ENCODE measurements at regions of chr10 and their contacts with region 1.

Region 1: DNA sequence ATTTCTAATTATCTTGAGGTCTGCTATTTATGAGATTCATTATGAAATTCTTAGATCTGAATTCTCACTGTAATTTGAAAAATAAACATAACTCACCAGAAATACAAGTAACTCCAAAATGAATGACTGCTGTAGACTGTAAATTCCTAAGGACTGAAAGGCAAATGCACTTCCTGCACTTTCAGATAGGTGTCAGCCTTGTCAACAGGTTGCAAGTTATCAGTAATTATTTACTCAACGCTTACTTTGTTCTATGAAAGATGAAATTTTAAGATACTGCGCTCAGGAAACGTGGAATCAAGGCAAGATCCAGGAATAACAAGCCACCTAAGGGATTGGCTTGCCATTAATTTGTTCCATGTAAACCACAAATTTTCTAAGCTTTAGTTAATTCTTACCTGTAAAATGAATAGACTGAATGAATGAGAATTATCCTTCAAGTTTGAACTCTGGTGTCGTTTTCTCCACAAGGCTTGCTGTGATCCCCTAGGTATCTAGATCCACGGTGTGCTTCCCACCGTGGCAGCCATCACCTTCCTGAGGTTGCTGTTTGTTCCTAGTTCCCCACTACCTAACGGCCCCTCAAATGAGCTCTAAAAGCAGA is 12.6 kb downstream of the DHX32 start:
- DNase-seq: peak in 1 of 3 donors; percentile 12
- H3K4me3 ChIP-seq: no peak overlapping the region
- H3K4me3 Mint-ChIP-seq: no peak overlapping the region
- H3K27ac ChIP-seq: no peak overlapping the region
- H3K27ac Mint-ChIP-seq: no peak overlapping the region
- H3K4me1 ChIP-seq: no peaks in the 10 kb centered on the region
- H3K4me1 Mint-ChIP-seq: no peaks in the 10 kb centered on the region
- H3K27me3 ChIP-seq: no peaks in the 10 kb centered on the region
- H3K27me3 Mint-ChIP-seq: peaks cover 0 to 2% (median 2%) of the 10 kb centered on the region in 3 donors
- CTCF ChIP-seq: peak; percentile 75

Region 2: DNA sequence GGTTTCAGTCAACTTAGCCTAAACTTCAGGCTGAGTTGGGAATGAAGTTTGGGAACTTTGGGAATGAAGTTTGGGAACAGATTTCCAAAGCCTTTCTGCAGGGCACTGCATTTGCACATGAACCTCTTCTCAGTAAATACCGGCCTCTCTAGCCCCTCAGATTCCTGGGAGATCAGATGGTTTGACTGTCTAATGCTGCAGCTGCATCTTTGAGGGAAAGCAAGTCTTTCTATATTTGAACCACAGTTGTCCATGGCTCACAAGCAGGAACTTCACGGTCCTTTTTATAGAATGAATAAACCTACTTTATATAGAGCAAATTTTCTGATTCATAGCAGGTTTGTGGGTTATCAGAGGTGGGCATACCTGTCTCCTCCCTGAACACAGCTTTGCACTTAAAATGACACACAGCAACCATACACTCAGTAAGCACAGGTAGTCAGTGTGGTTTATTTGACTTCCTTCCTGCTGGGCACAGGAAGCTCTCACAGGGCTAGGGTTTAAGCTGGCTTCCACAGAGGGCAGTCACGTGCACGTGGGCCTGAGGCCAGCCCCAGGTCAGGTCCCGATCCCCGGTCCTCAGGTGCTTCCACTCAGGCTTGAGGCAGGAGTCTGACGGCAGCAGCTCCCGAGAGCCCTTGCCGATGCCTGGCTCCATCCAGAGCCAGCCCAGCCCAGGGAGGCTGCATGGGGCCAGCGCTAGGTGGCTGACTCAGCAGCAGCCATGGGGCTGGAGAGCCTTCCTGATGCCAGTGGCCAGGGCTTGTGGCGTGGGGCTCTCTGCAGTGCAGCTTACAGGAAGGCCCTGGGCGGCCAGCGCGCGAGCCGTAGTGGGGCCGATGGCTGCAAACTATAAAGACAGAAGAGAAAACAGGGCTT is 80.1 kb before region 1 on chr10:
- intact Hi-C with region 1: no loop called
- DNase-seq: no peak
- H3K4me3 ChIP-seq: no peak overlapping the region
- H3K4me3 Mint-ChIP-seq: no peak overlapping the region
- H3K27ac ChIP-seq: no peak overlapping the region
- H3K27ac Mint-ChIP-seq: no peak overlapping the region
- H3K4me1 ChIP-seq: no peaks in the 10 kb centered on the region
- H3K4me1 Mint-ChIP-seq: peaks cover 2% of the 10 kb centered on the region
- H3K27me3 ChIP-seq: no peaks in the 10 kb centered on the region
- H3K27me3 Mint-ChIP-seq: peaks cover 0 to 2% (median 2%) of the 10 kb centered on the region in 3 donors
- CTCF ChIP-seq: no peak

Region 3: DNA sequence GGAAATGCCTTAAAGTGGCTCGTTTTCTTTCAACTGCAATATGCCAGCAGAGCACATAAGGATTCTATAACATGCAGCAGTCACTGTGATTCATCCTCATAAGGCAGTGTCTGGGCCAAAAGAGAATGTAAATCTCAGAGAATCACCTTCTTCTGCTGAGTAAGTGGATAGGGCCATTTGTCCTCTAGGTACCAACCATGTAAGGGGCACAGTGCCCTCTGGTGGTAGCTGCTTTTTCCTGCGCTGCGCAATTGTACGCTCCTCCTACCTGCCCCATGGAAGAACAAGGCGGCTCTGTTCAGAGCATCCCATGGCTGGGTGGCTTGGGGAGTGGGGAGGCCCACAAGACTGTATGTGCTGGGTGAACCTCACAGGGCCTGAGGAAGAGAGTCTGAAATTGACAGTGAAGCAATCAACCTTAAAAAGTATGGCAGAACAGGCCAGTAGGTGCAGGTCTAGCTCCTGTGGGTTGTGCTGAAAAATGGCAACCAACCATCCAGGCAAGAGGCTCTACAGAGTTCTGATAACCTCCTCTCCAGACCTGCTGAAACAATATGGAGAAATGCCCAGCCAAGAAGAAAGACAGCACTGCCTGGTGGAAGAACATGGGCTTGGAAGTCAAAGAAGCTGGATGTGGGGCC is 880.7 kb after region 1 on chr10:
- intact Hi-C with region 1: loop called in 1 of 2 experiments (anchors 10 kb)
- DNase-seq: peak; percentile 6 to 22 (median 16)
- H3K4me3 ChIP-seq: no peak overlapping the region
- H3K4me3 Mint-ChIP-seq: peak overlapping the region in 1 of 2 donors; percentile 40
- H3K27ac ChIP-seq: no peak overlapping the region
- H3K27ac Mint-ChIP-seq: no peak overlapping the region
- H3K4me1 ChIP-seq: no peaks in the 10 kb centered on the region
- H3K4me1 Mint-ChIP-seq: no peaks in the 10 kb centered on the region
- H3K27me3 ChIP-seq: no peaks in the 10 kb centered on the region
- H3K27me3 Mint-ChIP-seq: peaks cover 0 to 4% (median 2%) of the 10 kb centered on the region in 3 donors
- CTCF ChIP-seq: peak; percentile 56